ENCODE measurements at regions of chr9 and their contacts with region 1.

Region 1: DNA sequence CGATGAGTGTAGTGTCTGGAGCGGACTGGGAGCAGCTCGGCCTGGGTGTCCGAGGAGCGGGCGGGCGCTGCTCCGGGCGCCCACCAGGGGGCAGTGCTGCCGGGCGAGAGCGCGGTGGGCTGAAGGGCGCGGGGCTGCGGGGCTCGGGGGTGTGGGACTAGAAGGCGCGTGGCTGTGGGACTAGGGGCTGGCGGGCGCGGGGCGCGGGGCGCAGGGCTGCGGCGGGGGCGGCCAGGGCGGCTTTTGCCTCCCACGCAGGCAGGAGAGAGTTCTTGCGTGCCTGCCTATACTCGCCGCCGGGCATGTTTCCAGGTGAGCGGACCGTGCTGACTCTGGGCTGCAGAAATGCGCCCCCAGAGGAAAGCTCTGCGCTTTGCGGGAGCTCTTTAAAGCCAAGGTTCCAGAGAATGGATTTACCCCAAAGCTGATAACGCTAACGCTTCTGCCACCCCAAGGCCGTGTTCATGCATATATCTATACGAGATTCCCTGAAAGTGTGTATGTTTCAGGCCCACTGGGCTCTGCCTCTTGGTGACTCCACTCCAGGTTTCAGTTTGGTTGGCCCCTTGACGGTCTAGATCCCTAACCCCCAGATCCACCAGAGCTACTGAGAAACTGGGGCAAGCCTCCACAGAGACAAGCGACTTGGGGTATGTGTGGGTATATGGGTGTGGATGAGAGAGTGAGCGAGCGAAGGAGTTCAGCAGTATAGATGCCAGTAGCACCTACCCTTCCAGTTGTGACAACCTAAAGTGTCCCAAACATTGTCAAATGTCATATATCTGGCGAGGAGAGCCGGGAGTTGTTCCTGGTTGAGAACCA is 56.2 kb downstream of the ACER2 start:
- DNase-seq: peak; percentile 37 to 80 (median 66)
- ATAC-seq: peak; percentile 93
- H3K4me3 ChIP-seq: peak overlapping the region; percentile 26 to 35
- H3K4me3 Mint-ChIP-seq: peak overlapping the region; percentile 77 to 87 (median 79)
- H3K27ac ChIP-seq: no peak overlapping the region
- H3K27ac Mint-ChIP-seq: no peak overlapping the region
- H3K4me1 ChIP-seq: peaks cover 0 to 11% of the 10 kb centered on the region in 2 experiments
- H3K4me1 Mint-ChIP-seq: peaks cover 5 to 15% (median 11%) of the 10 kb centered on the region in 3 donors
- H3K27me3 ChIP-seq: peaks cover 0 to 4% of the 10 kb centered on the region in 2 experiments
- H3K27me3 Mint-ChIP-seq: no peaks in the 10 kb centered on the region

Region 2: DNA sequence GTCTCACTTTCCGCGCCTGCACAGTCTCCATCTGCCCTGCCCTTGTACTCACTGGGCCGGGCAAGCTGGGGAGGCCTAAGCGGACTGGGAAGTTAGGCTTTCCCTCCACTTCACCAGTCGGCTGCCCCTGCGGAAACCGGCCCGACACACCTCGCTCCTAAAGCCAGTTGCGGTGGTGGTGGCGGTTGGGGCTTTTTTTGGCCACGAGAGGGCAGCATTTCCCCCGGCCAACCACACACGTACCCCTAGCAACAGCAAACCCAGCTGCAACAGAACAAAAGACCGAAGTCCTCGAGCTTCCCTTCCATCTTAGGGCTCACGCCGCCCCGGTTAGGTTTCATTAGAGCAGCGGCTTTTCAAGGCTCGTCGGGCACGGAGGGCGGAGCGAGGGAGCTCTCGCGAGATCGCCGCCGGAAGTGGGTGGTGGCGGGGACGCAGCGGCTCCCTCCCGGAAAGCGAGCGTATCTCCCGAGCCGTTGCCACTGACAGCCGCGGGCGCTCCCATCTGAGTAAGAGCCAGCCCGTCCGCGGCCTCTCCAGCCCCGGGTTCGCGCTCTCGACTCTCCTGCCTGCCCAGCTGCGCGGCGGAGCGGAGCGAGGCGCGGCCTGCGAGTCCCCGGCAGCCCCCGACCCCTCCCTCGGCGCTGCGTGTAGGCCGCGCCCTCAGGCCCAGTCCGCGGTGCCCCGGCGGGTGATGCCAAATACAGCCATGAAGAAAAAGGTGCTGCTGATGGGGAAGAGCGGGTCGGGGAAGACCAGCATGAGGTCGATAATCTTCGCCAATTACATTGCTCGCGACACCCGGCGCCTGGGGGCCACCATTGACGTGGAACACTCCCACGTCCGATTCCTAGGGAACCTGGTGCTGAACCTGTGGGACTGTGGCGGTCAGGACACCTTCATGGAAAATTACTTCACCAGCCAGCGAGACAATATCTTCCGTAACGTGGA is 415.7 kb before region 1 on chr9 and contains the start of gene RRAGA:
- CTCF ChIA-PET with region 1: interaction called in 1 of 2 experiments, 14 read pairs
- POLR2A ChIA-PET with region 1: no interaction called
- DNase-seq: peak; percentile 88 to 97 (median 92)
- ATAC-seq: peak; percentile 90 to 94 (median 92)
- H3K4me3 ChIP-seq: peak within 1 kb of the TSS; percentile 90 to 95
- H3K4me3 Mint-ChIP-seq: peak within 1 kb of the TSS; percentile 91 to 96 (median 94)
- H3K27ac ChIP-seq: peak within 1 kb of the TSS; percentile 96
- H3K27ac Mint-ChIP-seq: peak within 1 kb of the TSS; percentile 96 to 97
- H3K4me1 ChIP-seq: peaks cover 19 to 35% of the 10 kb centered on the region in 2 experiments
- H3K4me1 Mint-ChIP-seq: peaks cover 35 to 54% (median 43%) of the 10 kb centered on the region in 3 donors
- H3K27me3 ChIP-seq: no peaks in the 10 kb centered on the region
- H3K27me3 Mint-ChIP-seq: no peaks in the 10 kb centered on the region
- total RNA-seq, gene RRAGA: 25.0 to 55.3 (median 42.0) TPM

Region 3: DNA sequence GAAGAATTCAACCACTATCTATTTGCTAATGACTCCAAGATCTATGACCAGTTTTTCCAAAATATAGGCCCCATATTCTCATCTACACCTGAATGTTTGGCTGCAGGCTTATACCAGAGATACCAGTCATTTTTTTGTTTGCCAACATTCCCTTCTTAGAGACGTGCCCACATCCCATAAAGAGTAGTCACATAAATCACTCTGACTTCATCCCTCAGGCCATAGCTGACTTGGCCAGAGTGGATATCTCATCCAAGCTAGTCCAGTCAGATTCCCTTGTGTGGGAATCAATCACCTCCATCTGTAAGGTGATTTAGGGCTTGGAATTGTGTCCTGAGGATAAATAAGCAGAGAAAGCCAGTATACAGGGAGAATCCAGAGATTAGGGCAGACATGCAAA is 448.2 kb after region 1 on chr9:
- CTCF ChIA-PET with region 1: no interaction called
- POLR2A ChIA-PET with region 1: interaction called in 1 of 2 experiments, 12 read pairs
- DNase-seq: no peak
- ATAC-seq: no peak
- H3K4me3 ChIP-seq: no peak overlapping the region
- H3K4me3 Mint-ChIP-seq: no peak overlapping the region
- H3K27ac ChIP-seq: no peak overlapping the region
- H3K27ac Mint-ChIP-seq: no peak overlapping the region
- H3K4me1 ChIP-seq: no peaks in the 10 kb centered on the region
- H3K4me1 Mint-ChIP-seq: no peaks in the 10 kb centered on the region
- H3K27me3 ChIP-seq: no peaks in the 10 kb centered on the region
- H3K27me3 Mint-ChIP-seq: no peaks in the 10 kb centered on the region

Region 4: GRCh38 chr9:20593551-20593950 is 1128.6 kb after region 1 on chr9:
- CTCF ChIA-PET with region 1: no interaction called
- POLR2A ChIA-PET with region 1: no interaction called
- DNase-seq: no peak
- ATAC-seq: no peak
- H3K4me3 ChIP-seq: no peak overlapping the region
- H3K4me3 Mint-ChIP-seq: no peak overlapping the region
- H3K27ac ChIP-seq: no peak overlapping the region
- H3K27ac Mint-ChIP-seq: no peak overlapping the region
- H3K4me1 ChIP-seq: peaks cover 0 to 14% of the 10 kb centered on the region in 2 experiments
- H3K4me1 Mint-ChIP-seq: peaks cover 55 to 70% (median 59%) of the 10 kb centered on the region in 3 donors
- H3K27me3 ChIP-seq: no peaks in the 10 kb centered on the region
- H3K27me3 Mint-ChIP-seq: no peaks in the 10 kb centered on the region

Measured in T-cell (primary cell).